ENCODE measurements at regions of chrX and their contacts with region 1.

Region 1: DNA sequence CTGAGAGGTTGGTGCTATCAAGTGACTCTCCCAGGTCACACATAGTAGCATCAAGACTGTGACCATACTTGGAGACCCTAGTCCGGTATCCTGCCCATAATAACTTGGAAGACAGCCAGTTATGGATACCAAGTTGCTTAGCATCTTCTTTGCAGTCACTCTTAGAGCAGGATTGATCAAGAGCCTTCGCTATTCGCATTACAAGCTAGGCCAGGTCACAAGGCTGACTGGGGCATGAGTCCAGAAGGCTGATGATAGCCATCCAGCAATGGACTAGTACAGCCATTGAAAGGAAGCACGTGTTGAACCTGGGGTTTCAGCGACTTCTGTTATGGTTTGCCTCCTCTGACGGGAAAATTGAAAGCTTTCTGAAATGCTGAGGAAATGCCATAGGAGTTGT is 157.6 kb downstream of the POLA1 start:
- DNase-seq: no peak
- H3K4me3 Mint-ChIP-seq: no peak overlapping the region
- H3K27ac Mint-ChIP-seq: no peak overlapping the region
- H3K4me1 Mint-ChIP-seq: no peaks in the 10 kb centered on the region
- H3K27me3 Mint-ChIP-seq: no peaks in the 10 kb centered on the region

Region 2: GRCh38 chrX:24838629-24839028 is 12.7 kb before region 1 on chrX:
- CTCF ChIA-PET with region 1: interaction called, 16 read pairs
- POLR2A ChIA-PET with region 1: no interaction called
- DNase-seq: peak; percentile 39
- H3K4me3 Mint-ChIP-seq: no peak overlapping the region
- H3K27ac Mint-ChIP-seq: no peak overlapping the region
- H3K4me1 Mint-ChIP-seq: no peaks in the 10 kb centered on the region
- H3K27me3 Mint-ChIP-seq: no peaks in the 10 kb centered on the region

Region 3: GRCh38 chrX:24870143-24870542 is 18.9 kb after region 1 on chrX:
- CTCF ChIA-PET with region 1: no interaction called
- POLR2A ChIA-PET with region 1: no interaction called
- DNase-seq: no peak
- H3K4me3 Mint-ChIP-seq: no peak overlapping the region
- H3K27ac Mint-ChIP-seq: no peak overlapping the region
- H3K4me1 Mint-ChIP-seq: no peaks in the 10 kb centered on the region
- H3K27me3 Mint-ChIP-seq: no peaks in the 10 kb centered on the region

Region 4: DNA sequence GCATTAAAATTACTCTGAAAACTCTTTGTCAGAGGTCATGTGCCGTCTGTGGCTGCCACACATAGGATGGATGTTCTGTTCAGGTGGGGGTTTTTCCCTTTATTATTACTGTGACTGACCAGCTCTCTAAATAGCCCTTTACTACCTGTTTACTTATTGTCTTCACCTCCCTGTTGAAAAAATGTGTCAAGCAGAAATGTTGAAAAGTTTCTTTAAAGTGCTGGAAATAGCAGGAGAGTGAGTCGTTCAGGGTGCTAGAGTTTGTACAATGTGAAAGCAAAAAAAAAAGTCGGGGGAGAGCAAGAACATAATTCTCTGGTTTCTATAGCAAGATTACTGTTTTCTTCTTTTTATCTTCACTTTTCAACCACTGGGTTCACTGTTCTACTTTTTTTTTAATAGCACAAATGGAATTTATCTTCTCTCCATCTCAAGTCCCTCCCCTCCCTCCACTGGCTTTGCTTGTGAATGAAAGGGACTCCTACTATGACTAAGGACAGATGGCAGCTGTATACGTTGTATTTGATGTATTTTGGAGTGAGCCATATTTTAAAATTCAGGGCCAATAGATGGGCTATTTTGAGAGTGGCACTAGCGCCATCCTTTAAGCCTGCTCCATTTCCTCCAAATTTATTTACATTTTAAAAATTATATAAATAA is 131.1 kb after region 1 on chrX:
- CTCF ChIA-PET with region 1: no interaction called
- POLR2A ChIA-PET with region 1: no interaction called
- DNase-seq: no peak
- H3K4me3 Mint-ChIP-seq: no peak overlapping the region
- H3K27ac Mint-ChIP-seq: no peak overlapping the region
- H3K4me1 Mint-ChIP-seq: no peaks in the 10 kb centered on the region
- H3K27me3 Mint-ChIP-seq: no peaks in the 10 kb centered on the region